Activated CD8-positive, alpha-beta memory T cell treated with anti-CD3 and anti-CD28 coated beads, Interleukin-2, amount 10 ng/mL, durations not matched to agents 7 days and 5 days (primary cell): ENCODE measurements at regions of chr16 and their contacts with region 1.

Region 1: DNA sequence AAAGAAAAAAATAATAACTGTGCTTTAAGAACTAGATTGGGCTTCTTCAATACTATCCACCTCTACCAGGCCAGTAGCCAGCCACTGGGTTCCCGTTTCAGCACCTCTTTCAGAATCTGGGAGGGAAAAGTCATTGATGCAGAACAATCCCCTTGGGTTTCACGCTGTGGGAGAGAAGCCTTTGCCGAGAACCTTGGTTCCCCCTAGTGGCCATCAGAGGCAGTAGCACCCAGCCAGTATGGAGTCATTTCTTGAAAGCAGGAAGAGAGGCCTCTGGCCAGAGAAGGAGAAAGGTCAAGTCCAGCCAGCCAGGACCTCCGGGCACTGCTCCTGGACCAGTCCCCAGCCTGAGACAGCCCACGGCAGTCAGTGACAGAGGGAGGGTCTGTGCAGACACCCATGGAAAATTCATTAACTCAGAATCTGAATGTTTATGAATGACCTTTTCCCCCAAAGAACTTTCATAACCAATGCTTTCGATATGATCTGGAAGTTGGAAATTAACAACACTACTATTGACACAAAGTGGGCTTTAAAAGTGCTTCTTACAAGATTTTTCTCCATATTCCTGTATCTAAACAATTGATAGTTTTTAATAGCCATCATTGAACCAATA is 51.2 kb upstream of the CDH5 start:
- DNase-seq: peak; percentile 68
- ATAC-seq: peak; percentile 94
- H3K4me3 Mint-ChIP-seq: no peak overlapping the region
- H3K27ac Mint-ChIP-seq: no peak overlapping the region
- H3K4me1 Mint-ChIP-seq: no peaks in the 10 kb centered on the region
- H3K27me3 Mint-ChIP-seq: peaks cover 10% of the 10 kb centered on the region

Region 2: DNA sequence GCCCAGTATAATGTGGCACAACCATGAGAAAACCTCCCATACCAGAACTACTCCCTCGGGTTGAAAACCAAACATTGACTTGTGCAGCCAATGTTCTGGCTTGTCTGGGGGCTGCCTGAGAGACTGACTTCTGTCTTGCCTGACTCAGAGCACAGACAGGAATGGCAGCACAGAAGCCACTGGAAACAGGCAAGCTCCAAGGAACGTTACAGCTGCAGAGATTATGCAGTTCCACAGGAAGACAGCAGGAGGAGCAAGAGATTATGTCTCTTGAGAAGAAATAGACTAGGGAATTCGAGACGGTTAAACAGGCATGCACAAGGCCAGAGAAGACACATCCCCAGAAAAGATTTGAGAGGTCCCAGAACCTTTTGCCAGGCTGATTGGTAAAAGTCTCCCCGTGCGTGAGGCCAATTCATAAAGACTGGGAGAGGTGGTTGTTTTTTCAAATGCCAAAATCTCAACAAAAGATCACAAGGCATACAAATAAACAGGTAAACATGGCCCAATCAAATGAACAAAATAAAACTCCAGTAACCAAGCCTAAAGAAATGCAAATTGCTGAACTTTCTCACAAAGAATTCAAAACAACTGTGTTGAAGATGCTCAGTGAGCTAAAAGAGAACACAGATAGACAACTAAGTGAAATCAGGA is 39.4 kb before region 1 on chr16:
- CTCF ChIA-PET with region 1: interaction called, 26 read pairs
- DNase-seq: peak; percentile 39
- ATAC-seq: no peak
- H3K4me3 Mint-ChIP-seq: no peak overlapping the region
- H3K27ac Mint-ChIP-seq: no peak overlapping the region
- H3K4me1 Mint-ChIP-seq: peaks cover 2% of the 10 kb centered on the region
- H3K27me3 Mint-ChIP-seq: peaks cover 34% of the 10 kb centered on the region

Region 3: DNA sequence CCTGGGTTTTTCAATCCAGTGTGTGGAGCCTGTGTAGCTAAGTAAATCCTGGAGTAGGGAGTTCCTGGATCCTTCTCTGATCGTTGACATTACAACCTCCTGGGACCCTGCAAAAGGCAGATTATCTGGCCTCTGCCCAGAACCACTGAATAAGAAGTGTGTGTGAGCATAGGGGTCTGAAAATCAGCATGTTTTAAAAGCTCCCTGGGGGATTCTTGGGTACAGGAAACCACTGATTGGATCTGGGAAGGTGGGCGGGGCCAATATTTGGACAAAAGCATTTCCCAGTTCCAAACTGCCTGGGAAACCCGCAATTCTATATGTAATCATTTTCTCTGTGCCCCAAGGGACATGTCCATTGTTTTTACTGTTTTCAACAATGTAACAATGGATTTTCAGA is 84.6 kb after region 1 on chr16:
- CTCF ChIA-PET with region 1: no interaction called
- DNase-seq: no peak
- ATAC-seq: no peak
- H3K4me3 Mint-ChIP-seq: no peak overlapping the region
- H3K27ac Mint-ChIP-seq: no peak overlapping the region
- H3K4me1 Mint-ChIP-seq: no peaks in the 10 kb centered on the region
- H3K27me3 Mint-ChIP-seq: peaks cover 16% of the 10 kb centered on the region